CD8-positive, alpha-beta T cell (primary cell): ENCODE measurements at regions of chr1 and their contacts with region 1.

Region 1: DNA sequence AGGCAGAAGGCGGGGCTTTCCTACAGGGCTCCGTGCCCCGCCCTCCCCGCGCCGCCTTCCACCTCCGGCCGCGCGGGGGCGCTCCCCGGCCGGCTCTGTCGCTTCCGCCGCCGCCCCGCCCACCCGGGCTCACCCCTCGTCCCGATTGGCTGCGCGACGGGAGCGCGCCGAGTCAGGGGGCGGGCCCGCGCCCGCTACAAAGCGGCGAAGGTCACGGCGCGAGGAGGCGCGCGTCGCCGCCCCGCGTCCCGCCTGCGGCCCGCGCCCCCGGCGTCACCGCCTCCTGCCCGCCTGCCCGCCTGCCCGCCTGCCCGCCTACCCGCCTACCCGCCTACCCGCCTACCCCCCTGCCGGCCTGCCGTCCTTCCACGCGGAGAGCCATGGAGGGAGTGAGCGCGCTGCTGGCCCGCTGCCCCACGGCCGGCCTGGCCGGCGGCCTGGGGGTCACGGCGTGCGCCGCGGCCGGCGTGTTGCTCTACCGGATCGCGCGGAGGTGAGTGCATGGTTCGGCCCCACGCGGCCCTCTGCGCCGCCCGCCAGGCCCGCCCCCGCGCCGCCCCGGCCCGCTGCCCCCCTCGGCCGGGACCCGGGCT is at the start of gene TMEM201:
- DNase-seq: peak; percentile 87 to 97 (median 95)
- ATAC-seq: peak; percentile 94
- H3K4me3 ChIP-seq: peak within 1 kb of the TSS; percentile 53 to 59
- H3K4me3 Mint-ChIP-seq: peak within 1 kb of the TSS; percentile 88
- H3K27ac ChIP-seq: peak within 1 kb of the TSS; percentile 21 to 32
- H3K27ac Mint-ChIP-seq: peak within 1 kb of the TSS; percentile 74
- H3K4me1 ChIP-seq: peaks cover 22% of the 10 kb centered on the region
- H3K4me1 Mint-ChIP-seq: peaks cover 24% of the 10 kb centered on the region
- H3K27me3 ChIP-seq: no peaks in the 10 kb centered on the region
- H3K27me3 Mint-ChIP-seq: no peaks in the 10 kb centered on the region
- CTCF ChIP-seq: peak; percentile 77
- total RNA-seq, gene TMEM201: 10.7 to 11.5 TPM

Region 2: GRCh38 chr1:9128520-9129265 is 460.0 kb before region 1 on chr1 and contains the start of gene GPR157:
- CTCF ChIA-PET with region 1: no interaction called
- POLR2A ChIA-PET with region 1: no interaction called
- intact Hi-C with region 1: loop called in 1 of 2 experiments (anchors 2 kb)
- DNase-seq: peak; percentile 56 to 88 (median 81)
- ATAC-seq: peak; percentile 84
- H3K4me3 ChIP-seq: peak within 1 kb of the TSS; percentile 61 to 68
- H3K4me3 Mint-ChIP-seq: peak within 1 kb of the TSS; percentile 90
- H3K27ac ChIP-seq: peak within 1 kb of the TSS; percentile 37 to 50
- H3K27ac Mint-ChIP-seq: peak within 1 kb of the TSS; percentile 75
- H3K4me1 ChIP-seq: peaks cover 33% of the 10 kb centered on the region
- H3K4me1 Mint-ChIP-seq: peaks cover 35% of the 10 kb centered on the region
- H3K27me3 ChIP-seq: no peaks in the 10 kb centered on the region
- H3K27me3 Mint-ChIP-seq: no peaks in the 10 kb centered on the region
- CTCF ChIP-seq: no peak
- total RNA-seq, gene GPR157: 1.9 to 2.9 TPM

Region 3: DNA sequence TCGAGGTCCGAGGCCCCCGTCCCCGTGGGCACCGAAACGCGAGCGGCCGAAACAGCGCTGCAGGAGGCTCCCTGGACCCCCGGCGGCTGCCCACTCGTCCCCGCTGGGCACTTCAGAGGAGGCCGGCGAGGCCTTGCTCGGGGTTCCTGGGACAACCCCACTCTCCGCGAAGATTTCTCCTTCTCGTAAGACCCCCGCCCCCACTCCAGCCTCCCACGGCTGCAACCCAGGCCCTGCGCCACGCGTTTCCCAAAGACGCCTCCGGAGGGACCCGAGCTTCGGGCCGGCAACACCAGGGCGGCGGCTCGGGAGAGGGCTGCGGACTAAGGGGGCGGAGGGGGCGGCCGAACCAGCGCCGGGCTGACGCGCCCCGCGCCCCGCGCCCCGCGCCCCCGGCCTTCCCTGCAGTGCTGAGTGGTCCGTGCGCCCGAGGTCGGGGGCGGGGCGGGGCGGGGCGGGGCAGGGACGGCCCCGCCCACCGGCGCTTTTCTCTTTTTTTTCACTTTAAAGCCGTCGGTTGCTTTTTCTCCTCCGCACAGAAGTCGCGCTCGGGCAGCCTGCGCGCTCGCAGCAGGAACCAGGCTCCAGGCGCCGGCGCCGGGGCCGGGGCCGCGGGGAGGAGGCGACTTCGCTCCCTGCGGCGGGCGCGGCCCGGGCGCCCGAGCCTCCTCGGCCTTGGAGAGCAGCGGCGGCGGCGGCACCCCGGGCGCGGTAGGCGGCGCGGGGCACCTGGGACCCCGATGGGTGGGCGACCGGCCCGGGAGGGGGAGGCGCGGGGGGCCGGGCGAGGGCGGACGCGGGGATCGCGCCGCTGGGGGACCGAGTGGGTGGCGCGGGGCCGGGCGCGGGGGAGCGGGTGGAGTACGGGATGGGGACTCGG is 296.0 kb before region 1 on chr1 and contains the start of gene SPSB1:
- CTCF ChIA-PET with region 1: no interaction called
- POLR2A ChIA-PET with region 1: no interaction called
- intact Hi-C with region 1: loop called in 1 of 2 experiments (anchors 2 kb)
- DNase-seq: peak; percentile 33 to 83 (median 66)
- ATAC-seq: peak; percentile 68
- H3K4me3 ChIP-seq: peak within 1 kb of the TSS; percentile 45 to 61
- H3K4me3 Mint-ChIP-seq: peak within 1 kb of the TSS; percentile 73
- H3K27ac ChIP-seq: no peak within 1 kb of the TSS
- H3K27ac Mint-ChIP-seq: no peak within 1 kb of the TSS
- H3K4me1 ChIP-seq: peaks cover 17% of the 10 kb centered on the region
- H3K4me1 Mint-ChIP-seq: peaks cover 10% of the 10 kb centered on the region
- H3K27me3 ChIP-seq: peaks cover 0 to 4% of the 10 kb centered on the region in 2 experiments
- H3K27me3 Mint-ChIP-seq: no peaks in the 10 kb centered on the region
- CTCF ChIP-seq: no peak
- total RNA-seq, gene SPSB1: 1.6 to 2.2 TPM

Region 4: DNA sequence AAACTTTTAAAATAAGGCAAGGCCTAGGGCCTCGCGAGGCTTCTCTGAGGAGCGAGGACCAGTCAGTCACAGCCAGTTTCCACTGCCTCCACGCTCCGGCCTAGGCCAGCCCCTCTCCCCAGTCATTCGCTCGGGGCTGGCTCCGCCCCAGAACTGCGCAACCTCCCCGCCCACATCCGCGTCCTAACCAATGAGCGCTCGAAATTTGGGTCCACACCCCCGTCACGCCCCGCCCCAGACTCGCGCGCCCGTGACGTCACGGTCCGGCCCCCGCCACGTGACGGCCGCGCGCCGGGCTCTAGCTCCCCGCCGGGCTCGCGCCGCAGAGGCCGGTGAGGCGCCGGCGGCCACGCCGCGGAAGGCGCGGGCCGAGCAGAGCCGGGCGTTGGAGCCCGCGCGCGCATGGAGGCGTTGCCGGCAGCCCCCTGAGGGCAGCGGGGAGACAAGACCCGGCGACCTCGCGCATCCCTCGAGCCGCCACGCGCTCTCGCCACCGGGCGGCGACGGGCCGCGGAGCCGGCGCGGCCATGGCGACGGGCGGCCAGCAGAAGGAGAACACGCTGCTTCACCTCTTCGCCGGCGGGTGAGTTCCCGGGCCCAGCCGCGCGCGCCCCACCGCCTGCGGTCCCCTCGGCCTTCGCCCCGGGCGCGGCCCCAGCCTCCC is 49.4 kb before region 1 on chr1 and contains the start of gene SLC25A33:
- CTCF ChIA-PET with region 1: no interaction called
- POLR2A ChIA-PET with region 1: no interaction called
- intact Hi-C with region 1: loop called (anchors 1 kb)
- DNase-seq: peak; percentile 91 to 99 (median 96)
- ATAC-seq: peak; percentile 99
- H3K4me3 ChIP-seq: peak within 1 kb of the TSS; percentile 62 to 68
- H3K4me3 Mint-ChIP-seq: peak within 1 kb of the TSS; percentile 90
- H3K27ac ChIP-seq: peak within 1 kb of the TSS; percentile 59 to 83
- H3K27ac Mint-ChIP-seq: peak within 1 kb of the TSS; percentile 91
- H3K4me1 ChIP-seq: peaks cover 19% of the 10 kb centered on the region
- H3K4me1 Mint-ChIP-seq: peaks cover 33% of the 10 kb centered on the region
- H3K27me3 ChIP-seq: no peaks in the 10 kb centered on the region
- H3K27me3 Mint-ChIP-seq: no peaks in the 10 kb centered on the region
- CTCF ChIP-seq: no peak
- total RNA-seq, gene SLC25A33: 10.1 to 11.2 TPM

Region 5: GRCh38 chr1:9651565-9652378 is 63.1 kb after region 1 on chr1 and contains the start of gene PIK3CD:
- CTCF ChIA-PET with region 1: no interaction called
- POLR2A ChIA-PET with region 1: no interaction called
- intact Hi-C with region 1: loop called (anchors 1 to 2 kb)
- DNase-seq: peak in 8 of 9 experiments; percentile 21 to 76 (median 56)
- ATAC-seq: peak; percentile 45
- H3K4me3 ChIP-seq: peak within 1 kb of the TSS; percentile 86
- H3K4me3 Mint-ChIP-seq: peak within 1 kb of the TSS; percentile 100
- H3K27ac ChIP-seq: peak within 1 kb of the TSS; percentile 68 to 78
- H3K27ac Mint-ChIP-seq: peak within 1 kb of the TSS; percentile 99
- H3K4me1 ChIP-seq: peaks cover 59% of the 10 kb centered on the region
- H3K4me1 Mint-ChIP-seq: peaks cover 71% of the 10 kb centered on the region
- H3K27me3 ChIP-seq: no peaks in the 10 kb centered on the region
- H3K27me3 Mint-ChIP-seq: no peaks in the 10 kb centered on the region
- CTCF ChIP-seq: no peak
- total RNA-seq, gene PIK3CD: 200 to 214 TPM

Region 6: GRCh38 chr1:9823943-9824701 is 235.5 kb after region 1 on chr1 and contains the start of gene CLSTN1:
- CTCF ChIA-PET with region 1: no interaction called
- POLR2A ChIA-PET with region 1: no interaction called
- intact Hi-C with region 1: loop called (anchors 1 kb)
- DNase-seq: peak; percentile 76 to 93 (median 91)
- ATAC-seq: peak; percentile 72
- H3K4me3 ChIP-seq: peak within 1 kb of the TSS; percentile 58 to 72
- H3K4me3 Mint-ChIP-seq: peak within 1 kb of the TSS; percentile 96
- H3K27ac ChIP-seq: peak within 1 kb of the TSS; percentile 37 to 76
- H3K27ac Mint-ChIP-seq: peak within 1 kb of the TSS; percentile 89
- H3K4me1 ChIP-seq: peaks cover 36% of the 10 kb centered on the region
- H3K4me1 Mint-ChIP-seq: peaks cover 43% of the 10 kb centered on the region
- H3K27me3 ChIP-seq: no peaks in the 10 kb centered on the region
- H3K27me3 Mint-ChIP-seq: no peaks in the 10 kb centered on the region
- CTCF ChIP-seq: no peak
- total RNA-seq, gene CLSTN1: 50.0 to 51.1 TPM